ENCODE measurements at regions of chr2 and their contacts with region 1.

Region 1: GRCh38 chr2:27932396-27932795 is 41.9 kb downstream of the BABAM2 start:
- DNase-seq: peak; percentile 78
- H3K4me3 ChIP-seq: peak overlapping the region in 1 of 3 experiments; percentile 5
- H3K27ac ChIP-seq: peak overlapping the region; percentile 90
- H3K4me1 ChIP-seq: peaks cover 15% of the 10 kb centered on the region
- H3K27me3 ChIP-seq: no peaks in the 10 kb centered on the region
- CTCF ChIP-seq: no peak

Region 2: GRCh38 chr2:27798948-27799645 is 133.3 kb before region 1 on chr2:
- CTCF ChIA-PET with region 1: no interaction called
- dilution Hi-C with region 1: no loop called
- in situ Hi-C with region 1: no loop called
- intact Hi-C with region 1: loop called (anchors 2 kb)
- DNase-seq: peak; percentile 100
- H3K4me3 ChIP-seq: no peak overlapping the region
- H3K27ac ChIP-seq: peak overlapping the region; percentile 94
- H3K4me1 ChIP-seq: peaks cover 30% of the 10 kb centered on the region
- H3K27me3 ChIP-seq: no peaks in the 10 kb centered on the region
- CTCF ChIP-seq: no peak